Activated naive CD4-positive, alpha-beta T cell treated with anti-CD3 and anti-CD28 coated beads for 36 hours (primary cell): ENCODE measurements at regions of chr3 and their contacts with region 1.

Region 1: DNA sequence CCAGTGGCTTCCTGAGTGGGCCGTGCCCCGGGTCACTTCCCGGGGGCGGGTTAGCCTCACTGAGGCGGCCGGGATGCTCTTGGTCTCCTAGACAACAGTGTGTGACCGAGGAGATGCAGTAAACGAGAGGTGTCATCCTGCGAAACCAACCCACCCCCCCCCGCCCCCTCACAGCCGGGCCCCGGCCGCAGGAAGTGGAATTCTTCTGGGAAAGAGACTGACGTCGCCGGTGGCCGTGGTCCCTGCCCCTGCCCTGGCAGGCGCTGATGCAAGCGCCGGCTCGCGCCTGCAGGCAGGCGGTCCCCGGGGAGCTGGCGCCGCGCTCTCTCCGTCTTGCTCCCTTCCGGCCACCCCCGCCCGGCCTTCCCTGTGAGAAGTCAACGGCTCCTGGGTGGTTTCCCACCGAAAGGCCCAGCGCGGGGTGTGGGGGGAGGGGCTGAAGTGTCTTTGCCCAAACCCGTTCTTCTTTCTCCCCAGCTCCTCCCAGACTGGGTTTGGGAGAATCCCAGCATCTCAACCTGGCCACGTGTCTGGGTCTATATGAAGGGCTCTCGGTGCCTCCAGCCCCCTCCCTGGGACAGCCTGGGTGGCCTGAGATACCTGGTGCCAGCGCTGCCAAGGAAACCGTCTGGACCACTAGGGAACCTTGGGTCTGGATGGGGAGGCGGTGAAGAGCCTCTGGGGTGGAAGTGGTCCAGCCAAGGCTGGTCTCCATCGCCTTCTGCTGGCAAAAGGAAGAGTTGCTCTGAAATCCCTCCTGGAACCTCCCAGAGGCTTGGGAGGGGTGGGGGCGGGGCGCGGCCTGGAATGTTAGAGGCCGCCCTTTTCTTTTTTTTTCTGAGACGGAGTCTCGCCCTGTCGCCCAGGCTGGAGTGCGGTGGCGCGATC is 47.3 kb downstream of the BHLHE40 start:
- DNase-seq: peak; percentile 86
- H3K4me3 Mint-ChIP-seq: peak overlapping the region; percentile 74
- H3K27ac Mint-ChIP-seq: peak overlapping the region; percentile 80
- H3K4me1 Mint-ChIP-seq: peaks cover 38% of the 10 kb centered on the region
- H3K27me3 Mint-ChIP-seq: no peaks in the 10 kb centered on the region

Region 2: GRCh38 chr3:4387210-4388204 is 639.1 kb before region 1 on chr3:
- CTCF ChIA-PET with region 1: no interaction called
- intact Hi-C with region 1: loop called (anchors 1 kb)
- DNase-seq: no peak
- H3K4me3 Mint-ChIP-seq: no peak overlapping the region
- H3K27ac Mint-ChIP-seq: peak overlapping the region; percentile 39
- H3K4me1 Mint-ChIP-seq: peaks cover 26% of the 10 kb centered on the region
- H3K27me3 Mint-ChIP-seq: no peaks in the 10 kb centered on the region

Region 3: GRCh38 chr3:4807381-4808280 is 218.9 kb before region 1 on chr3:
- CTCF ChIA-PET with region 1: no interaction called
- intact Hi-C with region 1: loop called (anchors 1 kb)
- DNase-seq: no peak
- H3K4me3 Mint-ChIP-seq: no peak overlapping the region
- H3K27ac Mint-ChIP-seq: no peak overlapping the region
- H3K4me1 Mint-ChIP-seq: peaks cover 28% of the 10 kb centered on the region
- H3K27me3 Mint-ChIP-seq: no peaks in the 10 kb centered on the region

Region 4: DNA sequence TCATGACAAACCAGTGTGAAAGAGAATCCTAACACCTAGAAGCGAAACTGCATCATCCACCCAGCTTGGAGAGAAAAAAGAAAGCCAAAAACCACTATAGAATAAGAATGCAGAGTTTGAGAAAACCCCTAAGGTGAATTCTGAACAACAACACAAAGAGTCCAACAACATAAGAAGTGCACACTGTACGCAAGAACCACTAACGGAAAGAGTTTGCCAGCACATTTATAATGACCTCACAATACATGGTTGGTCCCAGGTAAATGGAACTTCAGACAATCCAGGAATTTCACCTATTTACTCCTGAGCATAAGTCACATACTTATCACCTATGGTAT is 175.7 kb before region 1 on chr3:
- CTCF ChIA-PET with region 1: interaction called, 8 read pairs
- intact Hi-C with region 1: loop called (anchors 1 kb)
- DNase-seq: peak; percentile 64
- H3K4me3 Mint-ChIP-seq: peak overlapping the region; percentile 38
- H3K27ac Mint-ChIP-seq: peak overlapping the region; percentile 94
- H3K4me1 Mint-ChIP-seq: peaks cover 84% of the 10 kb centered on the region
- H3K27me3 Mint-ChIP-seq: no peaks in the 10 kb centered on the region

Region 5: DNA sequence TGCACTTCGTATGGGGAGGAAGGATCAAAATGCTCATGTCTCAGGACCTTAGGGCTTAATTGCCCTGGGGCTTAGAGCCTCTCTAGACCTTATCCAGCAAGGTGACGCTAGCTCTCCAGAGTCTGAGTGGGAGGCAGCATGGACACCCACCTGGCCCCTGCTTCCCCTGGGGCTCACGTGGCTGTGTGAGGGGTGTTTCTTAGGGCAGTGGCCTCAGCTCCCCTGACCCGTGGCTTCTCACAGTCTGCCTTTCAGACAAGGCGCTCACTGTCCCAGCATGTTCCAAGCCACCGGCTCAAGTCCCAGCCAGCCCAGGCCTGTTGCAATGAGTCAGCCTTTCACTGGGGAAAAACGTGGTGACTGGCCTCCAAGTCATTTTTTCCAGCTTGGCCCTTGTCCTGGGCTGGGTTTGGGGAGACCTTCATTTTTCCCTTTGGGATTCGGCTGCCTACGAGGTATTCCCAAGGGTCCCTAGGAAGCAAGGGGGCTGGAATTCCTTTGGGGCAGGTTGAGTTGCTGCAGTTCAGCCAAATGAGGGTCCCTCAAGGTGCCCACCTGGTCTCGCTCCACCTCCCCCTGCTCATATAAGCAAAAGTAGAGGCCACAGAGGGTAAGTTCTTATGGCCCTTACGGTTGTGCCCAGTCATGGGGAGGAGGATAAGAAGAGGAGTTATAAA is 31.6 kb before region 1 on chr3:
- CTCF ChIA-PET with region 1: interaction called, 6 read pairs
- intact Hi-C with region 1: loop called (anchors 1 kb)
- DNase-seq: peak; percentile 6
- H3K4me3 Mint-ChIP-seq: no peak overlapping the region
- H3K27ac Mint-ChIP-seq: no peak overlapping the region
- H3K4me1 Mint-ChIP-seq: peaks cover 16% of the 10 kb centered on the region
- H3K27me3 Mint-ChIP-seq: no peaks in the 10 kb centered on the region

Region 6: DNA sequence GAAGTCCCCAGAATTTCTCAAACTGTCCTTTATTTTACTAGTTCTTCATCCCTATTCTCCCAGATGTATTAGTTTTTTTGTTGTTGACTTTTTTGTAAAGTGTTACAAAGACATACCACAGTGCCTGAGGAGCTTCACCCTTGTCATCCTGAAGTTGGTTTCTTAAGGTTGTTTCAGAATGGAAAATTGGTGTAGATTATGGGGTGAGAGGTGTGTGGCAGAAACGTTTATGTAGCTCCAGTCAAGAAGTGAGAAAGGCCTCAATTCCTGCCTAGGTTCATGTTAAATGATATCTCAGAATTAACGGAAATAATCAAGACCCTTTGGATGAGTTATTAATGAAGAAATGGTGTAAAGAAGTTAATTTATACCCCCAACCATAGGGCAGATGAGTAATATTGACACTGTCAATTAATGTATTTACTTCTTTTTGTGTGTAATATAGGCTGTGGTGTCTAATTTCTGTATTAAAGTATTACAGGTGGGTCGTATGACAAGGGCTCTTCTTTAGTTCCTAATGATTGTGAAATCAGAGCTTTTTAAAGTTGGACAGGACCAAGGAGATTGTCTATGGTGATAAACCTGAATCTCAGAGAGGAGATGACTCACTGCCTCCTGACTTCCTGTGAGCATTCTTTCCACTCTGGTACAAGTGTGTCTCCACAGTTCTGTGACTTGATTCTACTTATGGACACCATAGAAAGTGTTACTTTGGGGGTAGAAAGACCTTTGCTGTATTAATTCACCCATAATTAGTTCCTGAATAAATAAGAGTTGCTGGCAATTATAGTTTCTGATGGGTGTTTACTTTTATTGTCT is 168.0 kb after region 1 on chr3:
- CTCF ChIA-PET with region 1: interaction called, 3 read pairs
- intact Hi-C with region 1: loop called (anchors 1 kb)
- DNase-seq: peak; percentile 66
- H3K4me3 Mint-ChIP-seq: peak overlapping the region; percentile 25
- H3K27ac Mint-ChIP-seq: peak overlapping the region; percentile 98
- H3K4me1 Mint-ChIP-seq: peaks cover 84% of the 10 kb centered on the region
- H3K27me3 Mint-ChIP-seq: no peaks in the 10 kb centered on the region